Sigmoid colon (tissue), 7 donors: ENCODE measurements at regions of chr6 and their contacts with region 1.

Region 1: DNA sequence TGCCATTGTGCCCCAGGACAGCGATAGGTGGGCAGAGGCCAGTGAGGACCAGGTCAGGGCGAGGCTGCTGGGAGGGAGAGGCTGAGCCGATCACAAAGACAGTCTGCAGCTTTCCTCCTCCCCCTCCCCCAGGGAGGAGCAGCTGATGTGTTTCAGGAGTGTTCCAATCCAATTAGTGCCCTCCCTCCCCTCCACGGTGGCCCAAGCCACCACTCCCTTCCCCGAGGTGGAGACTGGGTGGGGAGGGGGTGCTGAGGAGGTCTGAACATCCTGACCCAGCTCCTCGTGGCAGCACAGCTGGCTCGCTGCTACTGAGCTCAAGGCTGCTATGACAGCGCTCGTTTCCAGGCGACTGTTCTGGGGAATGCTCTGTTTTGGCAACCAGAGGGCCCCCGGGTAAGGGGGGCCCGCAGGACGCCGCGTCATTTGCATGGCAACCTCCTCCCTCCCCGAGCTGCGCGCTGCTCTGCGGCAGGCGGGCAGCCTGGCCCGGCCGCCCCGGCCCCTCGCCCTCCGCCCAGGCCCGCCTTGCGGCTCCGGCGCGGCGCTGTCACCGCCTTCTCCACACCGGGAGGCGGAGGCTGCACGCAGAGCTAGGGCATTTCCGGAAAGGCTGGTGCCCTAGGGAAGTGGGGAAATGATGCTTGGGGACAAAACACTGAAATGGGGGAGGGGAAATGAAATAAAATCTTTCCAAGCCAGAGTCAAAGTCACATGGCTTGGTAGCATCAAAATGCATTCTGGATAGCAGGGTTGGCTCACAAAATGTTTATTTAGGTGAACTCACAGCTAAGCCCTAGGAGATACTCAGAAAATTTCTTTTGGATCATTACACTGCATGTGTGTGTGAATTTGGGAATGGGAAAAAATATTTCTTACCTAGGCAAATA is 67.4 kb upstream of the PIM1 start:
- DNase-seq: peak; percentile 96
- H3K4me3 ChIP-seq: peak overlapping the region; percentile 18 to 50 (median 42)
- H3K27ac ChIP-seq: peak overlapping the region; percentile 79 to 87 (median 84)
- H3K4me1 ChIP-seq: peaks cover 0 to 24% (median 20%) of the 10 kb centered on the region in 4 donors
- H3K27me3 ChIP-seq: no peaks in the 10 kb centered on the region
- CTCF ChIP-seq: no peak
- EP300 ChIP-seq: peak in 3 of 4 donors; percentile 31 to 76 (median 59)
- POLR2A ChIP-seq: no peak

Region 2: DNA sequence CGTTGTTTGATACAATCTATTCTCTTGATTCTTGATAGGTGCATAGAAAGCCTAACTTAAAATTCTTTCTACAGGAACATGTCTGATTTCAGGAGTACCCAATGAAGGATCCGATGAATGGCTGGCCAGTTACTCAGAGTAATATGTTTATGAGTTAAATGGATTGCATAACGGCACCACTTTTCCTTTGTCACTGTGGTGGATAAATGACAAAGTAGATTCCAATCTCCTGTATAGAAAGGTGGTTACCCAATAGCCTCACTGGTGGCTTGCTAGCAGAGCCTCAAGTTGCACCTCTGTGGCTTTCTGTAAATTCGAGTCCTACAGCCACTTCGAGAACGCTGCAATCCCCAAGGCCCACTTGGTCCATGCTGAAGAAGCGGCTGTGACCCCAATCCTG is 1269.0 kb before region 1 on chr6:
- intact Hi-C with region 1: no loop called
- DNase-seq: no peak
- H3K4me3 ChIP-seq: no peak overlapping the region
- H3K27ac ChIP-seq: no peak overlapping the region
- H3K4me1 ChIP-seq: no peaks in the 10 kb centered on the region
- H3K27me3 ChIP-seq: no peaks in the 10 kb centered on the region
- CTCF ChIP-seq: no peak
- EP300 ChIP-seq: no peak
- POLR2A ChIP-seq: no peak

Region 3: DNA sequence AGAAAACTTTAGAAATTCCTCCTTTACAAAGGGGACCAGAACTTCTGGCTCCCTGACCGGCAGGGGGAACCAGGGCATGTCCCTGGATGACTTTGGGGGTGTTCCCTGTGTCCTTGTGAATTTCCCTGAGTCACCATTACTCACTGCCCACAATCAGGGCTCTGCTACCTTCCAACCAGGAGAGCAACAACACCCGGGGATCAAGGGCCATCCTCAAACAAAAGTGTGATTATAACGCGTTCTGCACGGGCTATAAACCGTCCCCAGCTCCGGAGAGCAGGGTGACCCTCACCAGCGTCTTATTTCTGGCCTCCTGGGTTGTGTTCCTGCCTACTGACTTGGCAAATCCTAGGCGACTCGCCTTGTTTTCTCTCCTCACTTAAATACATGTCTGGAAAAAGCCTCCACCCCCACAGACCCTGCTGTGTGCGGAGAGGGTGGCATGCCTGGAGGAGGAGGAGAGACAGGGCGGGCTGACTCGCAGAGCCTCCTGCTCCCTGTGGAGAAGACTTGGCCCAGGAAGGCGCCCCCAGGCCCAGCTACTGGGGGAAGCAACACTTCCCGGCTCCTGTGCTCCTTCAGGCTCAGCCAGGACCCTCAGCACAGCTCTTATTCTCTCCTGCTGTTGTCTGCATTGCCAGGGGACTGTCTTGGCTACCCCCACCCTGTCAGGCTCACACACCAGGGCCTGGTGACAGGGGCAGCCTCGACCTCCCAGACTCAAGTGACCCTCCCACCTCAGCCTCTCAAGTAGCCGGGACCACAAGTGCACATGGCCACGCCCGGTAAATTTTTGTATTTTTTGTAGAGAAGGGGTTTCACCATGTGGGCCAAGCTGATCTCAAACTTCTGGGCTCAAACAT is 42.9 kb before region 1 on chr6:
- intact Hi-C with region 1: loop called (anchors 2 kb)
- DNase-seq: peak; percentile 85
- H3K4me3 ChIP-seq: peak overlapping the region in 1 of 4 donors; percentile 6
- H3K27ac ChIP-seq: peak overlapping the region; percentile 76 to 90 (median 86)
- H3K4me1 ChIP-seq: peaks cover 0 to 15% (median 13%) of the 10 kb centered on the region in 4 donors
- H3K27me3 ChIP-seq: no peaks in the 10 kb centered on the region
- CTCF ChIP-seq: peak in 3 of 4 experiments; percentile 43 to 55 (median 47)
- EP300 ChIP-seq: no peak
- POLR2A ChIP-seq: no peak